ENCODE measurements at regions of chr4 and their contacts with region 1.

Region 1: DNA sequence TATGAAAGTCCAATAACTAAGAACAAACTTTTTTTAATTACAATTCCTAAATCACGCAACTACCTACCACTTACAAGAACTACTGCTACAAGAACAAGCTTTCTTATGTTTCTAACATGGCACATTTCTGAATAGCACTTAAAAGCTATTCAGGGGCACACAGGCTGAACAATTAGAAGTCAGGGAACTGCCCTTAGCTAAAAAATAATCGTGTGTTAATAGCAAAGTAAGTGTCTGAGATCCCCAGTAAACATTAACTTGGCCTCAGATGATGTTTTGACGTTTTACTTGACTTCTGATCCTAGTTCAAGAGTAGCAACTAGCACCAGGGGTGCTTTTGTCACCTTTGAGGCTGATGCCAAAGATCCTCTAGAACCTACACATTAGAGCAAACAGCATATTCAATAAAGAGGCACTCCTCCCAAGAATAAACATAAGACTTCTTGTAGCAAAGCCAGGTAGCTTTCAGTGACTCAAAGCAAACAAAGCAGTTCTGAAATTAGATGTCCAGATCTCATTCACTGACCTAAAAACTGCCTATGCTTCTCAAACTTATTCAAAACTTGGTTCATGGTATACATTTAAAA is 16.2 kb downstream of the SPOCK3 start:
- DNase-seq: peak; percentile 79
- ATAC-seq: peak; percentile 92
- H3K4me3 ChIP-seq: no peak overlapping the region
- H3K27ac ChIP-seq: peak overlapping the region; percentile 36
- H3K4me1 ChIP-seq: peaks cover 28% of the 10 kb centered on the region
- H3K27me3 ChIP-seq: no peaks in the 10 kb centered on the region
- CTCF ChIP-seq: no peak

Region 2: GRCh38 chr4:167032871-167033270 is 185.2 kb before region 1 on chr4:
- CTCF ChIA-PET with region 1: no interaction called
- POLR2A ChIA-PET with region 1: no interaction called
- intact Hi-C with region 1: loop called (anchors 5 kb)
- DNase-seq: peak; percentile 31
- ATAC-seq: no peak; the same call in 1 of the 2 replicates
- H3K4me3 ChIP-seq: no peak overlapping the region
- H3K27ac ChIP-seq: no peak overlapping the region
- H3K4me1 ChIP-seq: peaks cover 17% of the 10 kb centered on the region
- H3K27me3 ChIP-seq: no peaks in the 10 kb centered on the region
- CTCF ChIP-seq: no peak

Region 3: GRCh38 chr4:167117273-167117672 is 100.8 kb before region 1 on chr4:
- CTCF ChIA-PET with region 1: no interaction called
- POLR2A ChIA-PET with region 1: no interaction called
- intact Hi-C with region 1: loop called (anchors 5 kb)
- DNase-seq: no peak
- ATAC-seq: no peak
- H3K4me3 ChIP-seq: no peak overlapping the region
- H3K27ac ChIP-seq: no peak overlapping the region
- H3K4me1 ChIP-seq: no peaks in the 10 kb centered on the region
- H3K27me3 ChIP-seq: no peaks in the 10 kb centered on the region
- CTCF ChIP-seq: no peak

Measured in PC-3 (cell line).